Activated CD8-positive, alpha-beta T cell treated with anti-CD3 and anti-CD28 coated beads for 36 hours (primary cell): ENCODE measurements at regions of chr1 and their contacts with region 1.

Region 1: DNA sequence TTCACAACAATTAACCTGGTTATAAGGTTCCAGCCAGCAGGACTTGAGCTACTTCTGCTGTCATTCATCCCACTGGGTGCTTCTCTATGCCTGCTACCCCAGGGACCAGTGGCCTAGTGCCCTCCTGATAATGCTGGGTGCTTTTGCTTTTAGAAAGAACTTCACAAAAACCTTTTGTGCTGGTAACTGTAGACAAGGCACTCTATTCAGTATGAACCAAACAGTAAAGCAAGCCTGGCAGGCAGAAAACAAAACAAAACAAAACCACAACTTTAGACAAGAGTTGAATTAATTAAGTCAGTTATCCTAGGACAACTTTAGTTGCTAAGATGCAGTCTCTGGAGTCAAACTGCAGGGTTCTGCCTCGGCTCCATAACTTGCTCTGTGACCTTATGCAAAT is 61.9 kb upstream of the ADGRL2 start:
- DNase-seq: no peak
- ATAC-seq: no peak
- H3K4me3 Mint-ChIP-seq: no peak overlapping the region
- H3K27ac Mint-ChIP-seq: no peak overlapping the region
- H3K4me1 Mint-ChIP-seq: no peaks in the 10 kb centered on the region
- H3K27me3 Mint-ChIP-seq: no peaks in the 10 kb centered on the region
- CTCF ChIP-seq: no peak

Region 2: GRCh38 chr1:81800695-81801650 is 62.1 kb after region 1 on chr1 and contains the start of gene ADGRL2:
- CTCF ChIA-PET with region 1: no interaction called
- POLR2A ChIA-PET with region 1: no interaction called
- intact Hi-C with region 1: loop called (anchors 10 kb)
- DNase-seq: no peak
- ATAC-seq: peak; percentile 42
- H3K4me3 Mint-ChIP-seq: peak within 1 kb of the TSS; percentile 43
- H3K27ac Mint-ChIP-seq: no peak within 1 kb of the TSS
- H3K4me1 Mint-ChIP-seq: peaks cover 3% of the 10 kb centered on the region
- H3K27me3 Mint-ChIP-seq: peaks cover 41% of the 10 kb centered on the region
- CTCF ChIP-seq: no peak
- total RNA-seq, gene ADGRL2: not detected